Activated CD4-positive, alpha-beta T cell treated with anti-CD3 and anti-CD28 coated beads, Interleukin-2, amount 10 ng/mL, durations not matched to agents 24 days and 14 days (primary cell): ENCODE measurements at regions of chr16 and their contacts with region 1.

Region 1: GRCh38 chr16:589658-590159 is at the start of gene RAB40C:
- DNase-seq: peak; percentile 99
- H3K4me3 Mint-ChIP-seq: peak within 1 kb of the TSS; percentile 95
- H3K27ac Mint-ChIP-seq: peak within 1 kb of the TSS; percentile 100
- H3K4me1 Mint-ChIP-seq: peaks cover 17% of the 10 kb centered on the region
- H3K27me3 Mint-ChIP-seq: no peaks in the 10 kb centered on the region
- total RNA-seq, gene RAB40C: 12.5 and 16.5 TPM in 2 replicates

Region 2: DNA sequence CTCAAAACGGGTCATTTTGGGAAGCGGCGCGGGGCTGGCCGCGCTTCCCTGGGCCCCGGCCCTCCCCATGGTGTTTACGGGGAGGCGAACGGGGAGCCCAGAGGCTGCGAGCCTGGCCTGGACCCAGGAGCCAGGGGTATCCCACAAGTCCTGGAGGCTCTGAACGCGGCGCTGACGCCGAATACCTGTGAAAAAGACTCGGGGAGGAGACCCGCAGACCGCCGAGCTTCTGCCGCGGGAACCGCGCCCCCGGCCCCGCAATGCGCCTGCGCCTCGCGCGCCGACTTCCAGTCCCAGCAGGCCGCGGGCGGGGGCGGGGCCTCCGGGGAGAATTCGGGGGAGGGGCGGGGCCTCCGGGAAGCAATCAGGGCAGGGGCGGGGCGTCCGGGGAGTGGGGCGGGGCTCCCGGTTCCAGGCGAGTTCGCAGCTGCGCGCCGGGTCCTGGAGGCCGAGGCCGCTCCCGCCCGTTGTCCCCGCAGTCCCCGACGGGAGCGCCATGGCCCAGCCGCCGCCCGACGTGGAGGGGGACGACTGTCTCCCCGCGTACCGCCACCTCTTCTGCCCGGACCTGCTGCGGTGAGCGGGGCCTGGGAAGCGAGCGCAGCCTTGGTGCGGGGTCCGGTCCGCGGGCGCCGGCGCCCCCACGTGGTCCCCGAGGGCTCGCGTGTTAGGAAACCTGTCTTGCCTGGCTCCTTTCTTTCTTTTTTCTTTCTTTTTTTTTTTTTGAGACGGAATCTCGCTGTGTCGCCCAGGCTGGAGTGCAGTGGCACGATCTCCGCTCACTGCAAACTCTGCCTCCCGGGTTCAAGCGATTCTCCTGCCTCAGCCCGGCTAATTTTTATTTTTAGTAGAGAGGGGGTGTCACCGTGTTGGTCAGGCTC is 188.0 kb before region 1 on chr16 and contains the start of gene DECR2:
- intact Hi-C with region 1: no loop called
- DNase-seq: peak; percentile 98
- H3K4me3 Mint-ChIP-seq: peak within 1 kb of the TSS; percentile 84
- H3K27ac Mint-ChIP-seq: peak within 1 kb of the TSS; percentile 84
- H3K4me1 Mint-ChIP-seq: peaks cover 11% of the 10 kb centered on the region
- H3K27me3 Mint-ChIP-seq: peaks cover 1% of the 10 kb centered on the region
- total RNA-seq, gene DECR2: 17.6 and 18.5 TPM in 2 replicates

Region 3: DNA sequence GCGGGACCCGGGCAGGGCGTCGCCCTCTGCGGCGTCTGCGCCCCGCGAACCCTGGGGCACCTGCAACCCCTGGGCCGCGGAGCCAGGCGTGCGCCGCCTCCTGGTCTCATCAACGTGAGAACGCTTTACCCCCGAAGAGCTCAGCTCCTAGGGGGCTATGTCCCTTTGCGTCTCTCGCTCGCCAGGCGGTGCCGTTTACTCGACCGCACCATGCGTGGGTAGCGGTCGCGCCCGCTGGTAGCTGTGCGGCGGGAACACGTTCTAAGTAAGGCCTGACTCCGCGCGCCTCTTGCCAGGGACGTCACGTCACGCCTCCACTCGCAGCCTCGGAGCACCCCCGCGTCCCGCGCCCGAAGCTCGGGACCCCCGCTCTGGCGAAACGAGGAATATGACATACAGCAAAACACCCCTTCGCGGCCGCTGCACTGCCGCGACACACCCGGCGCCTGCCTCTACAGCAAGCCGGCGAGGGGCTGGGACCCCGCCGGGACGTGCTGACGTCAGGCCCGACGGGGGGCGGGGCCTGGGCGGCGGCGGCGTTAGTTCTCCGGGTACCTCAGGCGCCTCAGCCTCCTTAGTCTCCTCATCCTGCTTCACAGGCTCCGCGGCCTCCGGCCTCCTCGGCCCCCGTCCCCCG is 164.5 kb before region 1 on chr16 and contains the start of gene RAB11FIP3:
- intact Hi-C with region 1: loop called (anchors 1 kb)
- DNase-seq: peak; percentile 97
- H3K4me3 Mint-ChIP-seq: peak within 1 kb of the TSS; percentile 86
- H3K27ac Mint-ChIP-seq: peak within 1 kb of the TSS; percentile 88
- H3K4me1 Mint-ChIP-seq: peaks cover 25% of the 10 kb centered on the region
- H3K27me3 Mint-ChIP-seq: peaks cover 16% of the 10 kb centered on the region
- total RNA-seq, gene RAB11FIP3: 40.2 and 40.5 TPM in 2 replicates

Region 4: GRCh38 chr16:527006-527753 is 62.5 kb before region 1 on chr16 and contains the start of gene CAPN15:
- intact Hi-C with region 1: loop called (anchors 1 kb)
- DNase-seq: peak; percentile 96
- H3K4me3 Mint-ChIP-seq: peak within 1 kb of the TSS; percentile 94
- H3K27ac Mint-ChIP-seq: peak within 1 kb of the TSS; percentile 95
- H3K4me1 Mint-ChIP-seq: peaks cover 18% of the 10 kb centered on the region
- H3K27me3 Mint-ChIP-seq: no peaks in the 10 kb centered on the region
- total RNA-seq, gene CAPN15: 121 and 124 TPM in 2 replicates

Region 5: DNA sequence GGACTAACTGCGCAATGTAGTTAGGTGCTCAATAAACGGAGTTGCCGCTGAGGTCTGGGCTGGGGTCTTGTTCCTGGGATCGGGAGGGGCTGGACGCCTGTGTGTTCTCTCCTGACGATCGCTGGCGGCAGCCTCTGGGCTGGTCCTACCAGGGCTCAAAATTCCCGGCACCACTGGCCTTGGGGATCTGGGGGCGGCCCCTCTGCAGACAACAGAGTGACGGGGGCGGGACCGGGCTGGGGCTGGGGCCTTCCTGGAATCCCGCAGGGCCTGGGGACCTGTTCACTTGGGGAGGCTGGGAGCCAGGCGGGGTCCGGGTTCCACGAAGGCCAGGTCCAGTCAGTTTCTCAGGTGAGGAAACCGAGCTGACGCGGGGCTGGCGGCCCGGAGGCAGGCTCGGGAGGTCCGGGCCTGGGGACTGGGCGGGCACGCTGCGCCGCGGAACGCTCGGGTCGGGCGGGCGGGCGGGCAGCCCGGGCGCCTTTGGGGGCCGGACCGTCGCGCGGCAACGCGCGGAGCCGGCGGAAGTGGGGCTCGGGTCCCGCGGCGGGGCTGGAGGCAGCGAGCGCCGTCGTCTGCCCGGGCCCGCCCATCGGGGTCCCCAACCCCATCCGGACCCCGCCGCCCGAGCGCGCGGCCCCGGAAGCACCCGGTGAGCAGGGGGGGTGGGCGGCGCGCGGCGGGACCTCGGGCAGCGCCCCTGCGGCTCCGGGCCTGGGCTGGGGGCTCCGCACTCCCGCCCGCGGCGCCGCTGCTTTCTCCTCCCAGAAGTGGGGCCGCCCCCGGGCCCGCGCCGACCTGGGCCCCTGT is 20.1 kb before region 1 on chr16 and contains the start of gene PIGQ:
- intact Hi-C with region 1: loop called (anchors 1 kb)
- DNase-seq: peak; percentile 91
- H3K4me3 Mint-ChIP-seq: peak within 1 kb of the TSS; percentile 89
- H3K27ac Mint-ChIP-seq: peak within 1 kb of the TSS; percentile 93
- H3K4me1 Mint-ChIP-seq: peaks cover 24% of the 10 kb centered on the region
- H3K27me3 Mint-ChIP-seq: no peaks in the 10 kb centered on the region
- total RNA-seq, gene PIGQ: 43.2 and 50.3 TPM in 2 replicates

Region 6: GRCh38 chr16:636206-637080 is 46.7 kb after region 1 on chr16 and contains the start of gene METTL26:
- intact Hi-C with region 1: loop called (anchors 1 kb)
- DNase-seq: peak; percentile 98
- H3K4me3 Mint-ChIP-seq: peak within 1 kb of the TSS; percentile 93
- H3K27ac Mint-ChIP-seq: peak within 1 kb of the TSS; percentile 95
- H3K4me1 Mint-ChIP-seq: peaks cover 6% of the 10 kb centered on the region
- H3K27me3 Mint-ChIP-seq: peaks cover 2% of the 10 kb centered on the region
- total RNA-seq, gene METTL26: 146 and 153 TPM in 2 replicates

Region 7: DNA sequence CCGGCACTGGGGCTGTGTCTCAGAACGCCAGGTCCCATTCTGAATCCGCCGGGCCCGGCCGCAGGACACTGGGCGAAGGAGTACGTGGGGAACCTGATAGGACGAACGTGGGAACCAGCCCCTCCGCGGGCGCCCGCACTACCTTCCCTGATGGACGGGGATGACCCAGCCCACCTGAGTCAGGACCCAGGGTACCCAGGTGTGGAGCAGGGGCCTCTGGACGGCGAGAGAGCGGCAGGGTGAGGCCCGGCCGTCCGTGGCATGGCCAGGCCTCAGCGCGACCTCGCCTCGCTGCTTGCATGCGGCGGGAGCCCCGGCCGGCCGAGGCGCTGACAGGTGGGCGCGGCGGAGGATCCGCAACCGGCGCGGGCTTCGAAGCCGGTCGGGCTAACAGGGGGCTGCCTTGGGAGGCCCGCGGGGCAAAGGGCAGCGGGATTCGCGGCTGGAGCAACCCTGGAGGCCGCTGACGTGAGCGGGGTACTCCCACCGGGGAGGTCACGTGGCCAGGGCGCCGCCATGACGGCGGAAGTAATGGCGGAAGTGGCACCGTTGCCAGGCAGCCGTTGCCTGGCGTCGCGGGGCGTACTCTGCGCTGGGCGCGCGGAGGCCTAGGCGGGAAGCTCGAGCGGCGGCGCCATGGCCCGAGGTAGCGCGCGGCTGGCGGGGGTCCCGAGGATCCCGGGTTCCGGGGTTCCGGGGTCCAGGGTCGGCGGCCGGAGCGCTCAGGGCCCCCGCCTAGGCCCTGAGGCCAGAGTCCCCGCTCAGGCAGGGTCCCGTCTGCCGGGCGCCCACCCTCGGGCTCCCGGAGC is 59.3 kb after region 1 on chr16 and contains the start of gene WDR90:
- intact Hi-C with region 1: loop called (anchors 2 kb)
- DNase-seq: peak; percentile 98
- H3K4me3 Mint-ChIP-seq: peak within 1 kb of the TSS; percentile 86
- H3K27ac Mint-ChIP-seq: peak within 1 kb of the TSS; percentile 85
- H3K4me1 Mint-ChIP-seq: peaks cover 7% of the 10 kb centered on the region
- H3K27me3 Mint-ChIP-seq: no peaks in the 10 kb centered on the region
- total RNA-seq, gene WDR90: 99.9 and 111 TPM in 2 replicates